ENCODE measurements at regions of chr19 and their contacts with region 1.

Region 1: GRCh38 chr19:58380722-58381466 is at the start of gene ZNF837:
- DNase-seq: peak; percentile 97 to 100 (median 99)
- H3K4me3 ChIP-seq: peak within 1 kb of the TSS; percentile 61 to 85
- H3K4me3 Mint-ChIP-seq: peak within 1 kb of the TSS; percentile 91 to 97 (median 95)
- H3K27ac ChIP-seq: peak within 1 kb of the TSS; percentile 89
- H3K27ac Mint-ChIP-seq: peak within 1 kb of the TSS; percentile 84 to 98 (median 97)
- H3K4me1 ChIP-seq: peaks cover 26% of the 10 kb centered on the region
- H3K4me1 Mint-ChIP-seq: peaks cover 18 to 42% (median 26%) of the 10 kb centered on the region in 4 donors
- H3K27me3 ChIP-seq: no peaks in the 10 kb centered on the region
- H3K27me3 Mint-ChIP-seq: no peaks in the 10 kb centered on the region
- total RNA-seq, gene ZNF837: 3.4 to 3.5 TPM

Region 2: GRCh38 chr19:58059003-58059670 is 321.8 kb before region 1 on chr19 and contains the start of gene ZNF135:
- CTCF ChIA-PET with region 1: no interaction called
- POLR2A ChIA-PET with region 1: no interaction called
- intact Hi-C with region 1: no loop called
- DNase-seq: peak in 4 of 5 donors; percentile 13 to 55 (median 24)
- H3K4me3 ChIP-seq: no peak within 1 kb of the TSS
- H3K4me3 Mint-ChIP-seq: peak within 1 kb of the TSS in 7 of 8 donors; percentile 39 to 80 (median 71)
- H3K27ac ChIP-seq: no peak within 1 kb of the TSS
- H3K27ac Mint-ChIP-seq: peak within 1 kb of the TSS in 2 of 7 donors; percentile 42 to 48
- H3K4me1 ChIP-seq: peaks cover 3% of the 10 kb centered on the region
- H3K4me1 Mint-ChIP-seq: peaks cover 0 to 14% (median 4%) of the 10 kb centered on the region in 4 donors
- H3K27me3 ChIP-seq: no peaks in the 10 kb centered on the region
- H3K27me3 Mint-ChIP-seq: peaks cover 12 to 19% of the 10 kb centered on the region in 2 donors
- total RNA-seq, gene ZNF135: 0.41 to 0.47 TPM

Region 3: GRCh38 chr19:58228585-58229254 is 152.2 kb before region 1 on chr19 and contains the start of gene ZNF544:
- CTCF ChIA-PET with region 1: no interaction called
- POLR2A ChIA-PET with region 1: no interaction called
- intact Hi-C with region 1: loop called (anchors 10 kb)
- DNase-seq: peak; percentile 33 to 60 (median 41)
- H3K4me3 ChIP-seq: peak within 1 kb of the TSS; percentile 68 to 70
- H3K4me3 Mint-ChIP-seq: peak within 1 kb of the TSS; percentile 92 to 97 (median 94)
- H3K27ac ChIP-seq: peak within 1 kb of the TSS; percentile 50
- H3K27ac Mint-ChIP-seq: peak within 1 kb of the TSS; percentile 82 to 95 (median 88)
- H3K4me1 ChIP-seq: peaks cover 15% of the 10 kb centered on the region
- H3K4me1 Mint-ChIP-seq: peaks cover 15 to 31% (median 24%) of the 10 kb centered on the region in 4 donors
- H3K27me3 ChIP-seq: no peaks in the 10 kb centered on the region
- H3K27me3 Mint-ChIP-seq: no peaks in the 10 kb centered on the region
- total RNA-seq, gene ZNF544: 63.3 to 67.6 TPM

Region 4: GRCh38 chr19:58305065-58305931 is 75.6 kb before region 1 on chr19 and contains the start of gene ERVK3-1:
- CTCF ChIA-PET with region 1: interaction called, 3 read pairs
- POLR2A ChIA-PET with region 1: interaction called, 3 read pairs
- intact Hi-C with region 1: loop called (anchors 1 kb)
- DNase-seq: peak; percentile 93 to 97 (median 95)
- H3K4me3 ChIP-seq: peak within 1 kb of the TSS; percentile 54 to 83
- H3K4me3 Mint-ChIP-seq: peak within 1 kb of the TSS; percentile 97 to 100 (median 100)
- H3K27ac ChIP-seq: peak within 1 kb of the TSS; percentile 95
- H3K27ac Mint-ChIP-seq: peak within 1 kb of the TSS; percentile 97 to 100 (median 99)
- H3K4me1 ChIP-seq: peaks cover 31% of the 10 kb centered on the region
- H3K4me1 Mint-ChIP-seq: peaks cover 34 to 59% (median 45%) of the 10 kb centered on the region in 4 donors
- H3K27me3 ChIP-seq: no peaks in the 10 kb centered on the region
- H3K27me3 Mint-ChIP-seq: no peaks in the 10 kb centered on the region
- total RNA-seq, gene ERVK3-1: 72.3 to 76.6 TPM

Region 5: GRCh38 chr19:58336820-58337219 is 44.1 kb before region 1 on chr19:
- CTCF ChIA-PET with region 1: no interaction called
- POLR2A ChIA-PET with region 1: no interaction called
- intact Hi-C with region 1: no loop called
- DNase-seq: no peak
- H3K4me3 ChIP-seq: no peak overlapping the region
- H3K4me3 Mint-ChIP-seq: no peak overlapping the region
- H3K27ac ChIP-seq: no peak overlapping the region
- H3K27ac Mint-ChIP-seq: no peak overlapping the region
- H3K4me1 ChIP-seq: no peaks in the 10 kb centered on the region
- H3K4me1 Mint-ChIP-seq: peaks cover 0 to 7% (median 2%) of the 10 kb centered on the region in 4 donors
- H3K27me3 ChIP-seq: no peaks in the 10 kb centered on the region
- H3K27me3 Mint-ChIP-seq: no peaks in the 10 kb centered on the region

Region 6: DNA sequence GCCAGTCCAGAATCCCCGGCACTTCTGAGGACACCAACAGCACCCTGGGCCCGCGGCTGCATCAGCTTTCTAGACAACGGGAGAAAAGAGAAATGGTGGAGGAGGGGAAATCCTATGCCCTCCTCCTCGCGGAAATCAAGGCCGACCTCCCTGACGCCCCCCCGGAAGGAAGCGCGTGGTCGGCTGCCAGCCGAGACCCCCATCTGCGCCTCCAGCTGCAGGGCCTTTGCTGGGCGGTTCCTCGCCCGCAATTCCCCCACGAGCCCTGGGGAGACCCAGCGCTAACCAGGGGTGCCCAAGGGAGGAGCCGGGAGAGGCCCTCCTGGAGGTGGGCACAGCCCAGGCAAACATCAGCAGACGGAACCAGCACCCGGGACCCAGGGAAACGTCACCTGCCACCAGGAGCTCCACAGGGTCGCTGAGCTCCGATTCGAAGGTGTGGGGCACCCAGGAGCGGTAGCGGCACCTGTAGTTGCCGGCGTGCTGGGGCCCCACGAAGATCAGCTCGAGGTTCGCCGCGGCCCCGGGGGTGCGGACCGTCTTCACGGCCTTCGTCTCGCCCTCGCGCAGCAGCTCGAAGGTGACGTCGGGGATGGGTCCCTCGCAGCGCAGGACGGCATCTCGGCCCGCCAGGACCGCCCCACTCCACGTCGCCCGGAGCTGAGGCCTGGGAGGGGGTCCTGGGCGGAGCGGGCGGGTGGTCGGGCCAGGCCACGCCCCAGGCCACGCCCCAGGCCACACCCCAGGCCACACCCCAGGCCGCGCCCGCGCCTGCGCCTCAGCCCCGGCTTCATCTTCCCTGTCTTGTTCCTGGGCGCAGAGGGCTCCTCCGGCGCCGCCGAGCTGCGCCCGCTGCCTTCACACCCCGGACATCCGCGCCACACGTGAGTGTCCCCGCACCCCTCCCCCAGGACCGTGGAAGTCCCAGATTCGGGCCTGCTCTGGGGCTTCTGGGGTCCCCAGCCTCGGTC is 33.6 kb before region 1 on chr19:
- CTCF ChIA-PET with region 1: no interaction called
- POLR2A ChIA-PET with region 1: interaction called, 8 read pairs
- intact Hi-C with region 1: loop called (anchors 1 kb)
- DNase-seq: peak; percentile 67 to 75 (median 70)
- H3K4me3 ChIP-seq: peak overlapping the region; percentile 55 to 61
- H3K4me3 Mint-ChIP-seq: peak overlapping the region; percentile 89 to 94 (median 90)
- H3K27ac ChIP-seq: peak overlapping the region; percentile 70
- H3K27ac Mint-ChIP-seq: peak overlapping the region; percentile 83 to 93 (median 92)
- H3K4me1 ChIP-seq: peaks cover 21% of the 10 kb centered on the region
- H3K4me1 Mint-ChIP-seq: peaks cover 12 to 35% (median 22%) of the 10 kb centered on the region in 4 donors
- H3K27me3 ChIP-seq: no peaks in the 10 kb centered on the region
- H3K27me3 Mint-ChIP-seq: peaks cover 0 to 2% of the 10 kb centered on the region in 2 donors

Region 7: DNA sequence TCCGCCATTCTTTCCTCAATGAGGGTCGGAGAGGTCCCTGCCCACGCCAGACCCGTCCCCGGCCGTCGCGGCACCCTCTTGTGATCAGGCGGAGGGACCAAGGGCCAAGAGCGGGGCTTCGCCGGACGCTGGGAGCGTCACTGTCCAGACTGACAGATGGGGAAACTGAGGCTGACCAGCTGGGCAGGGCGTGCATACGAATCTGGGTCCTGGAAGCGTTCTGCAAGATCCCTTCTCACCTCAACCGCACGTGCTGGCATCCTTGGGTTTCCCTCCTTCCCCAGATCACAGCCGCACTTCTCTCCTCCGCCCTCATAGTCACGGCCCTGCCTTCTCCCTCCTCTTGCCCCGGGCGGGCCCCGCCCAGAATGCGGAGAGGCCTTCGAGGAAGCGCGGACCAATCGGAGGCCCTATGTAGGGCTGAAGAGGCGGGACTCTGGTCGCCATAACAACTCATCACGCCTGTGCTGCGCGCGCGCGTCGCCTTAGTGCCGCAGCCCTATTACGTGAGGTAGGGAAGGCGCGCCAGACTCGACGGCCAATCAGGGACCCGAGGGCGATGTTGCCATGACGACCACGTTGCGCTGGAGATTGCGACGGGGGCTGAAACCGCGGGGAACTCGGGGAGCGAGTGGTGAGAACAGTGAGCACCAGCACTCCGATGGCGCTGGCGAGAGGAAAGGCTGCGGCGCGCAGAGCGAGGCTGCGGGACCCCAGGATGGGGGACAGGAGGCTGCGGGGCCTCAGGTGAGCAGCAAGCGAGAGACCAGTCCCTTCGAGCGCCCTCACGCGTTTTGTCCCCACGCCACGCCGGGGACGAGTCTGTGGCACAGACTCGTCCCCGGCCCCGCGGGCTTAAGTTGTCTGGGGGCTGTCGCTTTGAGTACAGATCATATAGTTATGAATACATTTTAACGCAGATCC is 20.3 kb after region 1 on chr19:
- CTCF ChIA-PET with region 1: no interaction called
- POLR2A ChIA-PET with region 1: interaction called, 7 read pairs
- intact Hi-C with region 1: loop called (anchors 1 kb)
- DNase-seq: peak; percentile 98 to 100 (median 99)
- H3K4me3 ChIP-seq: peak overlapping the region; percentile 57 to 59
- H3K4me3 Mint-ChIP-seq: peak overlapping the region; percentile 87 to 97 (median 91)
- H3K27ac ChIP-seq: peak overlapping the region; percentile 74
- H3K27ac Mint-ChIP-seq: peak overlapping the region; percentile 89 to 99 (median 97)
- H3K4me1 ChIP-seq: peaks cover 20% of the 10 kb centered on the region
- H3K4me1 Mint-ChIP-seq: peaks cover 5 to 20% (median 10%) of the 10 kb centered on the region in 4 donors
- H3K27me3 ChIP-seq: peaks cover 8% of the 10 kb centered on the region
- H3K27me3 Mint-ChIP-seq: peaks cover 6 to 9% of the 10 kb centered on the region in 2 donors

Region 8: GRCh38 chr19:58416604-58417003 is 35.7 kb after region 1 on chr19:
- CTCF ChIA-PET with region 1: no interaction called
- POLR2A ChIA-PET with region 1: no interaction called
- intact Hi-C with region 1: no loop called
- DNase-seq: no peak
- H3K4me3 ChIP-seq: no peak overlapping the region
- H3K4me3 Mint-ChIP-seq: no peak overlapping the region
- H3K27ac ChIP-seq: no peak overlapping the region
- H3K27ac Mint-ChIP-seq: no peak overlapping the region
- H3K4me1 ChIP-seq: no peaks in the 10 kb centered on the region
- H3K4me1 Mint-ChIP-seq: peaks cover 0 to 3% (median 1%) of the 10 kb centered on the region in 4 donors
- H3K27me3 ChIP-seq: no peaks in the 10 kb centered on the region
- H3K27me3 Mint-ChIP-seq: no peaks in the 10 kb centered on the region

Region 9: DNA sequence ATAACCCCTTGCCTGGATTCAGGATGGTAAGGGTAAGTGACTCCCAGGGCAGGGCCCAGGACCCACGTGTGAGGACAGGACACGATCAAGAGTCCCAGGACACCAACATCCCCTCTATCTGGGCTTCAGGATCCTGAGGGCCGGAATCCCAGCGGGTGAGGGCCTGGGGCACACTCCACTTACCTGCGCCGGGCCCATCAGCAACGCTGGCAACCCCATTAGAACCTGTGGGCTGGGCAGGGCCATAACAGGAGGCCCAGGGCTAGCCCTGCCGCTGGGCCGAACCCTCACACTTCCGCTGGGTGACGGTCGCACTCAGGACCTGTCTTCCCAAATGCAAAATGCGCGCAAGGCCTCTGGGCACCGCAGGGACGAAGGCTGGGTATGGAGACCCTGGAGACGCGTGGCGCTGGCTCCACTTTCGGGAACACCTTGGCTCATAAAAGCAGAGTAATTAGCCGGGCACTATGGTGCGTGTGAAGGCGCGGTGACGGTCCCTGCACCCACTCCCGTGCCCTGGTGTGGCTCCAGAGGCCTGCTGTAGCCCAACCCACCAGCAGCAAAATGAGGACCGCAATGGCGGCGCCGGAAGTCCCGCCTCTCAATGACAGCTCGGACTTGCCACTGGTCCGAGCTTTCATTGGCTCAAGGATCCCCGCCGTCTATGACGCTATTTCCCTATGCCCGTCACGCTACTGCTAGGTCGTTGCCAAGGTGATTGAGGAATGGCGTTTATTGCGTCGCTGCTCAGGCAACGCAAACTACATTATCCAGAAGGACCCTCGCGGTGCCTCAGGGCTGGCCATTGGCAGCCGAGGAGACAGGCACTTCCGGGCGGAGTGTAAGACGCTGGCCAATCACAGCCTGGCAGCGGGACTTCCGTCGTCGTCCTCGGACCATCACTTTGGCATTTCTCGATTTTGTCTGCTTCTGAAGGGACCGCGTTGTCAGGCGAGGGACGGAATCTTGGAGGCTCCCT is 59.0 kb after region 1 on chr19 and contains the start of gene ZNF132:
- CTCF ChIA-PET with region 1: no interaction called
- POLR2A ChIA-PET with region 1: interaction called, 4 read pairs
- intact Hi-C with region 1: loop called (anchors 1 kb)
- DNase-seq: peak; percentile 93 to 99 (median 98)
- H3K4me3 ChIP-seq: peak within 1 kb of the TSS; percentile 72 to 80
- H3K4me3 Mint-ChIP-seq: peak within 1 kb of the TSS; percentile 87 to 97 (median 96)
- H3K27ac ChIP-seq: peak within 1 kb of the TSS; percentile 69
- H3K27ac Mint-ChIP-seq: peak within 1 kb of the TSS; percentile 82 to 100 (median 99)
- H3K4me1 ChIP-seq: peaks cover 18% of the 10 kb centered on the region
- H3K4me1 Mint-ChIP-seq: peaks cover 12 to 30% (median 22%) of the 10 kb centered on the region in 4 donors
- H3K27me3 ChIP-seq: no peaks in the 10 kb centered on the region
- H3K27me3 Mint-ChIP-seq: peaks cover 2 to 3% of the 10 kb centered on the region in 2 donors
- total RNA-seq, gene ZNF132: 9.5 to 11.7 TPM

Region 10: GRCh38 chr19:58466760-58467589 is 86.1 kb after region 1 on chr19 and contains the start of gene ZNF324:
- CTCF ChIA-PET with region 1: no interaction called
- POLR2A ChIA-PET with region 1: interaction called, 5 read pairs
- intact Hi-C with region 1: loop called (anchors 1 kb)
- DNase-seq: peak; percentile 94 to 96 (median 95)
- H3K4me3 ChIP-seq: peak within 1 kb of the TSS; percentile 52 to 83
- H3K4me3 Mint-ChIP-seq: peak within 1 kb of the TSS; percentile 82 to 91 (median 87)
- H3K27ac ChIP-seq: peak within 1 kb of the TSS; percentile 92
- H3K27ac Mint-ChIP-seq: peak within 1 kb of the TSS; percentile 80 to 93 (median 91)
- H3K4me1 ChIP-seq: peaks cover 20% of the 10 kb centered on the region
- H3K4me1 Mint-ChIP-seq: peaks cover 14 to 32% (median 22%) of the 10 kb centered on the region in 4 donors
- H3K27me3 ChIP-seq: no peaks in the 10 kb centered on the region
- H3K27me3 Mint-ChIP-seq: peaks cover 0 to 1% of the 10 kb centered on the region in 2 donors
- total RNA-seq, gene ZNF324: 27.6 TPM

Region 11: DNA sequence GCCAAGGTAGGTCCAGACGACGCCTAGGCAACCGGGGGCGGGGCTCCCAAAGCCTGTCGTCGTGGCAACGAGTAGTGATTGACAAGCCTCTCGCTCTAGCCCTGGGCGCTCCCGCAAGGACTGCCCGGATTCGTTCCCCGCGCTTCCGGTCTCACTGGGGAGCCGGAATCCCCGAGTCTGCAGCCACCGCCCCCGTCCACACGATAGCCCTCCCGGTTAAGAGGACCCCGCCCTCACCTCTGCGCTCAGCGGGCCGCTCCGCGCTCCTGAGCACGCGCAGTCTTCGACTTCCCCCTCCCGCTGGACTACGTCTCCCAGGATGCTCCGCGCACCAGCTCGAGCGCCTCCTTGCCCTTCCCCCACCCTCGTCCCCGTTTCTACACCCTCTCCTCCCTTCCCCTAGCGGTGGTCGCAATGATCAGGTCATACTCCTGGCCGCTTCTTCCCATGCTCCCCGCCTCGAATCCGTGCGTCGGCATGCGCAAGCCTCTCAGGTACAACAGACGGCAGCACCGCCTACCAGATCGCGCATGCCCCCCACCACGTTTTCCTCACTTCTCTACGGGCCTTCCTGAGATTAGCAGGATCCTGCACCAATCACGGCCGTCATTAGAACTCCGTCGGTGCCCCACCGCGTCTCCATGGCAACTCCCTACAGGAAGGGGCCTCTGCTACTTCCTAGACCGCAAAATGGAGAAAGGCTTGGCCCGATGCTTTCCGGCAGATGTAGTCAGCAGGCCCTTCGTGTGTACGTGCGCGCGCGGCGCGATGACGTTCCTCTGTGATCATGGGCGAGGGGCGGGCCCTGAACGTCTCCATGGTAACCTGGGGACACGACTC is 192.1 kb after region 1 on chr19 and contains the start of gene MZF1:
- CTCF ChIA-PET with region 1: no interaction called
- POLR2A ChIA-PET with region 1: no interaction called
- intact Hi-C with region 1: no loop called
- DNase-seq: peak; percentile 99 to 100 (median 100)
- H3K4me3 ChIP-seq: peak within 1 kb of the TSS; percentile 67 to 78
- H3K4me3 Mint-ChIP-seq: peak within 1 kb of the TSS; percentile 89 to 99 (median 96)
- H3K27ac ChIP-seq: peak within 1 kb of the TSS; percentile 99
- H3K27ac Mint-ChIP-seq: peak within 1 kb of the TSS; percentile 96 to 100 (median 100)
- H3K4me1 ChIP-seq: peaks cover 29% of the 10 kb centered on the region
- H3K4me1 Mint-ChIP-seq: peaks cover 16 to 44% (median 32%) of the 10 kb centered on the region in 4 donors
- H3K27me3 ChIP-seq: no peaks in the 10 kb centered on the region
- H3K27me3 Mint-ChIP-seq: no peaks in the 10 kb centered on the region
- total RNA-seq, gene MZF1: 42.7 to 44.4 TPM

Measured in CD4-positive, alpha-beta memory T cell (primary cell).